ENCODE measurements at regions of chr9 and their contacts with region 1.

Region 1: DNA sequence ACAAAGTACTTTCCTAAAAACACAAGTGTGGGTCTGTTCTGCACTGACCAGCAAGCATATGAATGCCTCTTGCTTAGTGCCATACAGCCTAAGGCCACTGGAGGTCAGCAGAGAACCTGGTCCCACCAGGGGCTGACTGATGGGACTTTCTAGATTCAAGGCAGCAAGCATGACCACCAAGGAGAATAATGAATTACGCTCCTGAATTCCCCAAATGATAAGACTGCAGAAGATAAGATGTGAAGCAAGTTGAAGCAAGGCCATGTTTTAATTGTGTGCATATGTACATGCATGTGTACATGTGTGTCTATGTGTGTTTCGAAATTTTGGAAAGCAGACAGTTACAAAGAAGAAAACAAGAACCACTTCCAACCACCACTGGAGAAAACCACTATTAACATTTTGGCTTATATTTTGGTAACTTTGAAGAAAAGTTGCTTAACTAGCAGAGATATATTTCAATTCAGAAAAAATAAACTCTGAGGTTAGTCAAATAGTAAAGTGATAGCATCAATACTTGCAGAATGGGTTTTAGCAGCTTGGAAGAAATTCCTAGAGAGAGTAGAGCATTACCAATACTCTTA is 70.5 kb downstream of the ERP44 start:
- DNase-seq: peak; percentile 76
- ATAC-seq: peak; percentile 99
- H3K4me3 ChIP-seq: no peak overlapping the region
- H3K27ac ChIP-seq: no peak overlapping the region
- H3K4me1 ChIP-seq: no peaks in the 10 kb centered on the region
- H3K27me3 ChIP-seq: no peaks in the 10 kb centered on the region
- CTCF ChIP-seq: peak; percentile 85
- POLR2A ChIP-seq: no peak
- RAD21 ChIP-seq: peak; percentile 92

Region 2: GRCh38 chr9:100098887-100099721 is 70.8 kb after region 1 on chr9 and contains the starts of genes ERP44 and INVS:
- CTCF ChIA-PET with region 1: no interaction called
- POLR2A ChIA-PET with region 1: no interaction called
- dilution Hi-C with region 1: no loop called
- in situ Hi-C with region 1: no loop called
- intact Hi-C with region 1: loop called (anchors 1 kb)
- DNase-seq: peak; percentile 99
- ATAC-seq: peak; percentile 99
- H3K4me3 ChIP-seq: peak within 1 kb of the TSS; percentile 88
- H3K27ac ChIP-seq: peak within 1 kb of the TSS; percentile 77
- H3K4me1 ChIP-seq: peaks cover 2% of the 10 kb centered on the region; the same call in 1 of the 2 replicates
- H3K27me3 ChIP-seq: no peaks in the 10 kb centered on the region
- CTCF ChIP-seq: no peak
- POLR2A ChIP-seq: peak; percentile 89
- RAD21 ChIP-seq: no peak
- total RNA-seq, gene ERP44: 9.1 and 16.1 TPM in 2 replicates
- total RNA-seq, gene INVS: 25.3 and 33.5 TPM in 2 replicates

Region 3: DNA sequence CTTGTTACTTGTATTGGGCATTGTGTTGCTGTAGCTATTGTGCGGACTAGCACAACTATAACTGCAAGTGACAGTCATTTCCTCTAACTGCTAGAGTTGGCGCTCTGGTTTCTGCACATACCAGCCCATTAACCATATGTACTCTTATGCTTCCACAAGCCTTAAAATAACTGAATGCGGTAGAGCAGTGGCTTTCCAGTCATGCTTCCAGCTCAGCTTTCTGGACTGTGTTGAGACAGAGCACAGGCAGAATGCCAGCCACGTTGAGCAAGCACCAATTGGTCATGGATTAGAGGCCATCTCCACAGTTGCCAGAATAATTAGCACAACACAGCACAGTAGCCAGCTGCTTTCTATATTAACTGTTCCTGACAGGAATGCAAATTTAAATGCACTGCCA is 82.9 kb after region 1 on chr9:
- CTCF ChIA-PET with region 1: no interaction called
- POLR2A ChIA-PET with region 1: no interaction called
- dilution Hi-C with region 1: no loop called
- in situ Hi-C with region 1: no loop called
- intact Hi-C with region 1: loop called (anchors 1 kb)
- DNase-seq: peak; percentile 98
- ATAC-seq: peak; percentile 96
- H3K4me3 ChIP-seq: no peak overlapping the region
- H3K27ac ChIP-seq: no peak overlapping the region
- H3K4me1 ChIP-seq: no peaks in the 10 kb centered on the region
- H3K27me3 ChIP-seq: no peaks in the 10 kb centered on the region
- CTCF ChIP-seq: no peak
- POLR2A ChIP-seq: no peak
- RAD21 ChIP-seq: no peak

Region 4: DNA sequence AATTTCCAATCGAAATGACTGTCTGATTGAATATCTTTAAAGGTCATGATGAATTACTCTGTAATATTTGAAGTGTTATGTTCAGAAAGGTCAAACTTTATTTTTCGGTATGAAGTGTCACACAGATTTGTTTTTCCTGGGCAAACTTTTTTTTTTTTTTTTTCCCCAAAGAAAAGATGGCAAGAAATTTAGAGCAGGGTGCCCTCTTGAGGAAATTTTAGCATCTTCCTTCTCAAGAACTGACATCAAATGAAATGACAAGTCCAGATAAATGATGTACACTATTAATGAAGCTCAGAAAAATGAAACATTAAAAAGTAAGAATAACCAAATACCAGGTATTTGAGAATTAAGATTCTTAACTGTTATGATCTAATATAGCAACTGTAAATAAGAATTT is 194.4 kb after region 1 on chr9:
- CTCF ChIA-PET with region 1: no interaction called
- POLR2A ChIA-PET with region 1: no interaction called
- dilution Hi-C with region 1: no loop called
- in situ Hi-C with region 1: loop called (anchors 10 kb)
- intact Hi-C with region 1: loop called (anchors 1 kb)
- DNase-seq: peak; percentile 53
- ATAC-seq: 0 out of 2 replicates have a peak, but pooled peaks have one; percentile 27
- H3K4me3 ChIP-seq: no peak overlapping the region
- H3K27ac ChIP-seq: no peak overlapping the region
- H3K4me1 ChIP-seq: peaks cover 2% of the 10 kb centered on the region
- H3K27me3 ChIP-seq: no peaks in the 10 kb centered on the region
- CTCF ChIP-seq: peak; percentile 61
- POLR2A ChIP-seq: no peak
- RAD21 ChIP-seq: peak; percentile 64

Region 5: DNA sequence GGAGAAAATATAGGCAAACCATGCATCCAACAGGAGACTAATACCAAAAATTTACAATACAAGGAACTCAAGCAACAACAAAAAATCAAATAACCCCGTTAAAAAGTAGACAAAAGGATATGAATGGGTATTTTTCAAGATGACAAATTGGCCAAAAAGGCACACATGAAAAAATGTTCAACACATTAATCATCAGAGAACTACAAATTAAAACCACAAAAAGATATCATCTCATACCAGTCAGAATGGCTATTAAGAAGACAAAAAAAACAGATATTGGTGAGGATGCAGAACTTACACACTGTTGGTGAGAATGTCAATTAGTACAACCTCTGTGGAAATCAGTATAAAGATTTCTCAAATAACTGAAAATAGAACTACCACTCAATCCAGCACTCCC is 289.4 kb after region 1 on chr9:
- CTCF ChIA-PET with region 1: no interaction called
- POLR2A ChIA-PET with region 1: no interaction called
- dilution Hi-C with region 1: no loop called
- in situ Hi-C with region 1: loop called (anchors 10 kb)
- intact Hi-C with region 1: loop called (anchors 5 kb)
- DNase-seq: no peak
- ATAC-seq: no peak
- H3K4me3 ChIP-seq: no peak overlapping the region
- H3K27ac ChIP-seq: no peak overlapping the region
- H3K4me1 ChIP-seq: no peaks in the 10 kb centered on the region
- H3K27me3 ChIP-seq: no peaks in the 10 kb centered on the region
- CTCF ChIP-seq: no peak
- POLR2A ChIP-seq: no peak
- RAD21 ChIP-seq: no peak

Measured in IMR-90 (cell line).